PC-9 (cell line): ENCODE measurements at regions of chr11 and their contacts with region 1.

Region 1: GRCh38 chr11:34565417-34566207 is 52.0 kb upstream of the ELF5 start:
- DNase-seq: no peak
- H3K4me3 ChIP-seq: no peak overlapping the region
- H3K27ac ChIP-seq: peak overlapping the region; percentile 83
- H3K4me1 ChIP-seq: peaks cover 35% of the 10 kb centered on the region
- H3K27me3 ChIP-seq: no peaks in the 10 kb centered on the region
- CTCF ChIP-seq: peak; percentile 77

Region 2: GRCh38 chr11:34192481-34193401 is 372.9 kb before region 1 on chr11:
- CTCF ChIA-PET with region 1: interaction called, 12 read pairs
- POLR2A ChIA-PET with region 1: no interaction called
- intact Hi-C with region 1: no loop called
- DNase-seq: peak; percentile 83 to 85
- H3K4me3 ChIP-seq: no peak overlapping the region
- H3K27ac ChIP-seq: peak overlapping the region; percentile 25; the same call in 1 of the 2 replicates
- H3K4me1 ChIP-seq: peaks cover 37% of the 10 kb centered on the region
- H3K27me3 ChIP-seq: no peaks in the 10 kb centered on the region
- CTCF ChIP-seq: no peak

Region 3: GRCh38 chr11:34501500-34501899 is 64.1 kb before region 1 on chr11:
- CTCF ChIA-PET with region 1: no interaction called
- POLR2A ChIA-PET with region 1: interaction called, 3 read pairs
- intact Hi-C with region 1: loop called (anchors 1 kb)
- DNase-seq: peak; percentile 78 to 96
- H3K4me3 ChIP-seq: peak overlapping the region; percentile 19; the same call in 1 of the 2 replicates
- H3K27ac ChIP-seq: peak overlapping the region; percentile 93
- H3K4me1 ChIP-seq: peaks cover 49% of the 10 kb centered on the region
- H3K27me3 ChIP-seq: no peaks in the 10 kb centered on the region
- CTCF ChIP-seq: no peak

Region 4: GRCh38 chr11:34537656-34538055 is 28.0 kb before region 1 on chr11:
- CTCF ChIA-PET with region 1: interaction called, 4 read pairs
- POLR2A ChIA-PET with region 1: interaction called, 5 read pairs
- intact Hi-C with region 1: loop called (anchors 2 kb)
- DNase-seq: peak; percentile 62 to 87
- H3K4me3 ChIP-seq: no peak overlapping the region
- H3K27ac ChIP-seq: no peak overlapping the region
- H3K4me1 ChIP-seq: peaks cover 16% of the 10 kb centered on the region
- H3K27me3 ChIP-seq: no peaks in the 10 kb centered on the region
- CTCF ChIP-seq: no peak

Region 5: GRCh38 chr11:34624069-34624468 is 58.5 kb after region 1 on chr11:
- CTCF ChIA-PET with region 1: no interaction called
- POLR2A ChIA-PET with region 1: interaction called, 11 read pairs
- intact Hi-C with region 1: no loop called
- DNase-seq: peak; percentile 79 to 80
- H3K4me3 ChIP-seq: peak overlapping the region; percentile 89
- H3K27ac ChIP-seq: peak overlapping the region; percentile 96
- H3K4me1 ChIP-seq: peaks cover 67% of the 10 kb centered on the region
- H3K27me3 ChIP-seq: no peaks in the 10 kb centered on the region
- CTCF ChIP-seq: peak; percentile 27; the same call in 1 of the 2 replicates

Region 6: GRCh38 chr11:34680918-34681554 is 115.4 kb after region 1 on chr11:
- CTCF ChIA-PET with region 1: no interaction called
- POLR2A ChIA-PET with region 1: no interaction called
- intact Hi-C with region 1: loop called (anchors 1 kb)
- DNase-seq: peak; percentile 85 to 99
- H3K4me3 ChIP-seq: no peak overlapping the region
- H3K27ac ChIP-seq: peak overlapping the region; percentile 86
- H3K4me1 ChIP-seq: peaks cover 60% of the 10 kb centered on the region
- H3K27me3 ChIP-seq: no peaks in the 10 kb centered on the region
- CTCF ChIP-seq: no peak